PC-9 (cell line): ENCODE measurements at regions of chr6 and their contacts with region 1.

Region 1: GRCh38 chr6:146719387-146719786 is 120.6 kb downstream of the ADGB start:
- DNase-seq: no peak
- H3K4me3 ChIP-seq: no peak overlapping the region
- H3K27ac ChIP-seq: no peak overlapping the region
- H3K4me1 ChIP-seq: no peaks in the 10 kb centered on the region
- H3K27me3 ChIP-seq: no peaks in the 10 kb centered on the region
- CTCF ChIP-seq: no peak

Region 2: DNA sequence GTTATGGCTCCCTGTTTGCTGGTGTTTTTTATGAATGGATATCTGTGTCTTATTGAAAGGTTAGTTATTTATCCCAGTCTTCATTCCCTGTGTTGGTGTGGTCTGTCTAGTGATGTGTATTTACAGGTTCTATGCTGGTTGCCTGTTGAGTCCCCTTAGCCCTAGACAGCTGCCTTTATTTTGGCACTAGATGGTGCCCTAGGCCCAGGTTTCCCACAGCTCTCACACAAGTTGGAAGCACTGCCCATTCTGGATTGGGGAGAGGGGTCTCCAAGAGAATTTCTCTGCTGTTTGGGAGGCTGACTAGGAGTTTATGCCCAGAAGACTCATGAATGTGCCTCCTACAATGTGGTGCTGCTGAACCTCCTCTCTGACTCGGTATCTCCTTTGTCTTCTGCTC is 678.1 kb before region 1 on chr6:
- CTCF ChIA-PET with region 1: no interaction called
- POLR2A ChIA-PET with region 1: no interaction called
- intact Hi-C with region 1: no loop called
- DNase-seq: peak in 1 of 2 experiments; percentile 5
- H3K4me3 ChIP-seq: no peak overlapping the region
- H3K27ac ChIP-seq: no peak overlapping the region
- H3K4me1 ChIP-seq: no peaks in the 10 kb centered on the region
- H3K27me3 ChIP-seq: no peaks in the 10 kb centered on the region
- CTCF ChIP-seq: peak; percentile 58

Region 3: GRCh38 chr6:146775226-146775625 is 55.8 kb after region 1 on chr6:
- CTCF ChIA-PET with region 1: no interaction called
- POLR2A ChIA-PET with region 1: no interaction called
- intact Hi-C with region 1: no loop called
- DNase-seq: peak in 1 of 2 experiments; percentile 36
- H3K4me3 ChIP-seq: no peak overlapping the region
- H3K27ac ChIP-seq: no peak overlapping the region
- H3K4me1 ChIP-seq: no peaks in the 10 kb centered on the region
- H3K27me3 ChIP-seq: no peaks in the 10 kb centered on the region
- CTCF ChIP-seq: peak; percentile 36

Region 4: GRCh38 chr6:147684906-147685305 is 965.5 kb after region 1 on chr6:
- CTCF ChIA-PET with region 1: no interaction called
- POLR2A ChIA-PET with region 1: no interaction called
- intact Hi-C with region 1: no loop called
- DNase-seq: no peak
- H3K4me3 ChIP-seq: no peak overlapping the region
- H3K27ac ChIP-seq: no peak overlapping the region
- H3K4me1 ChIP-seq: 0 out of 2 replicates have a peak, but pooled peaks cover 4% of the 10 kb centered on the region
- H3K27me3 ChIP-seq: no peaks in the 10 kb centered on the region
- CTCF ChIP-seq: no peak

Region 5: GRCh38 chr6:148620579-148621298 is 1901.4 kb after region 1 on chr6:
- CTCF ChIA-PET with region 1: no interaction called
- POLR2A ChIA-PET with region 1: interaction called, 10 read pairs
- intact Hi-C with region 1: no loop called
- DNase-seq: no peak
- H3K4me3 ChIP-seq: no peak overlapping the region
- H3K27ac ChIP-seq: no peak overlapping the region
- H3K4me1 ChIP-seq: no peaks in the 10 kb centered on the region
- H3K27me3 ChIP-seq: peaks cover 10% of the 10 kb centered on the region; the same call in 1 of the 2 replicates
- CTCF ChIP-seq: no peak